ENCODE measurements at regions of chr1 and their contacts with region 1.

Region 1: DNA sequence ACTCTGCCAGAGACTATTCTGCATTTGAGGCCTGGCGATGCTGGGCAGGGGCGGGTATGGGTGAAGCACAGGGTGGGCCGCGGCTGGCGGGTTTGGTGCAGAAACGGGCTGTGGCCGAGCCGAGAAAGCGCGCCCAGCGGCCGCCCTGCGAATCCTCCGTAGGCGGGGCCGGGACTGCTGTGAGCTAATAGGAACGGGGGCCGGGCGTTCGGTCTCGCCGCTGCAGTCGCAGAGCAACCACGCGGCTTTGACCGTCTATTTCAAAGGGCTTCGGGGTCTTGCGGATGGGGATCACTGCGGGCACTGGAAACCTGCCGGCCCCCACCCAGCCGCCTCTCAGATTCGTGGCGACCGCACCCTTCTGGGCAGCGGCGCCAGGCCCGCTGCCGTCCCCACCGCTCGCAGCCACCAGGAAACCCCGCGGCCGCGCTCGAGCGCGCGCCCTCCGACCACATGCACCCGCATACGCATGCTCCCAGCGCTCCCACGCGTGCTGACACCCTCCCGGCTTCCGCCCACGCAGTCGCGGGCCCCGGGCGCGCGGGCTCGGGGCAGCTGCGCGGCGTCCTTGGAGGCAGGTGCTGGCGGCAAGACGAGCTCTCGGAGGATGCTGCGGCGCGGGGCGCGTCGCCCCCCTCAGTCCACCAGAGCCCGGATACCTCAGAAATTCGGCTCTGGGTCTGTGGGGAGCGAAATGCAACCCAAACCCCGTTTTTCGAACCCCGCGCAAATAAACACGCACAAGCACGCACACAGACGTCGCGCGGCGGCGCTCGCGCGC is 32.6 kb downstream of the DNTTIP2 start:
- ATAC-seq: peak; percentile 53 to 78 (median 72)
- H3K4me3 ChIP-seq: peak overlapping the region; percentile 48 to 68 (median 58)
- H3K27ac ChIP-seq: peak overlapping the region; percentile 91 to 95
- H3K4me1 ChIP-seq: peaks cover 11 to 18% of the 10 kb centered on the region in 2 donors

Region 2: GRCh38 chr1:93447516-93448291 is 398.7 kb before region 1 on chr1 and contains the start of gene FNBP1L:
- in situ Hi-C with region 1: loop called in 4 of 9 experiments (anchors 25 kb)
- ATAC-seq: peak; percentile 83 to 91 (median 86)
- H3K4me3 ChIP-seq: peak within 1 kb of the TSS; percentile 92 to 97 (median 92)
- H3K27ac ChIP-seq: peak within 1 kb of the TSS; percentile 86 to 88
- H3K4me1 ChIP-seq: peaks cover 8 to 30% of the 10 kb centered on the region in 2 donors
- total RNA-seq, gene FNBP1L: 4.8 to 189 (median 125) TPM

Region 3: GRCh38 chr1:93749894-93750301 is 96.5 kb before region 1 on chr1:
- in situ Hi-C with region 1: loop called in 1 of 9 experiments (anchors 25 kb)
- ATAC-seq: no peak
- H3K4me3 ChIP-seq: no peak overlapping the region
- H3K27ac ChIP-seq: no peak overlapping the region
- H3K4me1 ChIP-seq: peaks cover 0 to 4% of the 10 kb centered on the region in 2 donors